Calu3 (cell line): ENCODE measurements at regions of chr3 and their contacts with region 1.

Region 1: GRCh38 chr3:145900056-145900829 is 260.7 kb downstream of the PLOD2 start:
- DNase-seq: no peak
- H3K4me3 Mint-ChIP-seq: no peak overlapping the region
- H3K27ac Mint-ChIP-seq: no peak overlapping the region
- H3K4me1 Mint-ChIP-seq: no peaks in the 10 kb centered on the region
- H3K27me3 Mint-ChIP-seq: no peaks in the 10 kb centered on the region
- CTCF ChIP-seq: no peak

Region 2: GRCh38 chr3:145882436-145882835 is 17.8 kb before region 1 on chr3:
- CTCF ChIA-PET with region 1: interaction called, 10 read pairs
- intact Hi-C with region 1: no loop called
- DNase-seq: no peak
- H3K4me3 Mint-ChIP-seq: no peak overlapping the region
- H3K27ac Mint-ChIP-seq: no peak overlapping the region
- H3K4me1 Mint-ChIP-seq: no peaks in the 10 kb centered on the region
- H3K27me3 Mint-ChIP-seq: no peaks in the 10 kb centered on the region
- CTCF ChIP-seq: no peak